ENCODE measurements at regions of chr2 and their contacts with region 1.

Region 1: DNA sequence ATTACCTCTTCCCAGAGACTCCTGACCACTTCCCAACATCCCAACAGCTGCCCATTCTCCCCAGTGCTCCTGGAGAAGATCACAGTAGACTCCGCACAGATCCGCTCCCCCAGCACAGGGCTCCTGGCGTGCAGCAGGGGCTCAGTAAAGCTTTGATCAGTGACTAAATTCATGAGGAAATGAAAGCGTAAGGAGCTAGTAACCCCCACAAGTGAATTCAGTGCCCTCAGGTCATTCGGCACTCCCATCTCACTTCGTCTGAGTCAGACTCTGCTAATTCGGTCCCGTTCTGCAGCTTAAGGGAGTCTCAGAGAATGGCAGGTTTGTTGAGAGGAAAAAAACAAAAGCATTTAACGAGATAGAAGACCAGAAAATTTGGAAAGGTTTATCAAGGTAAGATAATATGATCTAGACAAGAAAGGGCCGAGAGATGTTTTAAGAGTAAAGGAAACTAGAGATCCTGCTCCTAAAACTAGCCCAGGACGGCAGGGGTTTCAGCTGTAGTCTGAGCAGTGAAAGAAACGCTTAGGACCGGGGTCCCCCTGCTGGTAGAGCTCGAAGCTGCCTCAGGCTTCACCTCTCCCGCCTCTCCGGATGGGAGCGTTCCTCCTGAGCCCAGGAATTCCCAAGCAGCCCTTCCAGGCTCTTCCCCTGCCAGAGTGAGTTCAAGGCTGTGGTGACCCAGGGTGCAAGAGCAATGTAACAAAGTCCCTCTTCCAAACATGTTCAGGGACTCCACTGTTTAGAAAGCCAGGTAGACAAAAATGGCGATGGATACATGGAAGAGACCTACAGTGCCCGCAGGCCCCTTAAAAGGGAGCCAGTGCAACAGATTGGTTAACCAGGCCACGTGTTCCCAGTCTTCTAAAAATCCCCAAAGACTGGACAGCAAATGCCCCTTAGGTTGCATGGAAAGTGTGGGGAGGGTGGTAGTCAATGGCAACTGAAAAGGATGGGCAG is 127.3 kb downstream of the DNER start:
- DNase-seq: peak; percentile 92
- ATAC-seq: peak; percentile 97
- H3K4me3 Mint-ChIP-seq: peak overlapping the region; percentile 52
- H3K27ac Mint-ChIP-seq: 0 out of 2 replicates have a peak overlapping the region, but pooled peaks have one; percentile 4
- H3K4me1 Mint-ChIP-seq: peaks cover 23% of the 10 kb centered on the region
- H3K27me3 Mint-ChIP-seq: no peaks in the 10 kb centered on the region
- CTCF ChIP-seq: peak; percentile 81

Region 2: GRCh38 chr2:229342376-229342775 is 244.7 kb before region 1 on chr2:
- CTCF ChIA-PET with region 1: interaction called, 46 read pairs
- POLR2A ChIA-PET with region 1: no interaction called
- DNase-seq: peak; percentile 83
- ATAC-seq: peak; percentile 91
- H3K4me3 Mint-ChIP-seq: no peak overlapping the region
- H3K27ac Mint-ChIP-seq: no peak overlapping the region
- H3K4me1 Mint-ChIP-seq: no peaks in the 10 kb centered on the region
- H3K27me3 Mint-ChIP-seq: no peaks in the 10 kb centered on the region
- CTCF ChIP-seq: peak; percentile 42; the same call in 1 of the 2 replicates

Region 3: DNA sequence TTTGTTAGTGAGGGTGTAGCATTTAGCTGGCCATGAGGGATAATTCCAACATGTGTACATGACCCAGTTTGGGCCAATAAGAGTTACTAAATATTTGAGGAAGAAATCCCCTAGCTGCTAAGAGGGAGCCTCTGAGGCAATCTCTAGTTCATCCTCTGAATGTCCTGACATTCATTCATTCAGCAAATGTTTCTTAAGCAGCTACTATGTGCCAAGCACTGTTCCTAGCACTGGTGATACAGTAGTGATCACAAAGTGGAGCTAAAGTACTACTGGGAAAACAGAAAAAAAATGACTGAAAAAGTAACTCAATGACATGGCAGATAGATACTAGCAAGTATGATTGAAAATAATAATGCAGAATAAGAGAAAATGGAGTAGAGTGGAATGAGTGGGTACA is 236.1 kb before region 1 on chr2:
- CTCF ChIA-PET with region 1: interaction called, 11 read pairs
- POLR2A ChIA-PET with region 1: no interaction called
- DNase-seq: no peak
- ATAC-seq: no peak
- H3K4me3 Mint-ChIP-seq: no peak overlapping the region
- H3K27ac Mint-ChIP-seq: no peak overlapping the region
- H3K4me1 Mint-ChIP-seq: no peaks in the 10 kb centered on the region
- H3K27me3 Mint-ChIP-seq: no peaks in the 10 kb centered on the region
- CTCF ChIP-seq: no peak

Region 4: GRCh38 chr2:229431327-229431954 is 155.6 kb before region 1 on chr2:
- CTCF ChIA-PET with region 1: interaction called, 46 read pairs
- POLR2A ChIA-PET with region 1: no interaction called
- DNase-seq: no peak
- ATAC-seq: peak; percentile 28; the same call in 1 of the 2 replicates
- H3K4me3 Mint-ChIP-seq: no peak overlapping the region
- H3K27ac Mint-ChIP-seq: no peak overlapping the region
- H3K4me1 Mint-ChIP-seq: peaks cover 3% of the 10 kb centered on the region; the same call in 1 of the 2 replicates
- H3K27me3 Mint-ChIP-seq: no peaks in the 10 kb centered on the region
- CTCF ChIP-seq: peak; percentile 43; the same call in 1 of the 2 replicates

Region 5: DNA sequence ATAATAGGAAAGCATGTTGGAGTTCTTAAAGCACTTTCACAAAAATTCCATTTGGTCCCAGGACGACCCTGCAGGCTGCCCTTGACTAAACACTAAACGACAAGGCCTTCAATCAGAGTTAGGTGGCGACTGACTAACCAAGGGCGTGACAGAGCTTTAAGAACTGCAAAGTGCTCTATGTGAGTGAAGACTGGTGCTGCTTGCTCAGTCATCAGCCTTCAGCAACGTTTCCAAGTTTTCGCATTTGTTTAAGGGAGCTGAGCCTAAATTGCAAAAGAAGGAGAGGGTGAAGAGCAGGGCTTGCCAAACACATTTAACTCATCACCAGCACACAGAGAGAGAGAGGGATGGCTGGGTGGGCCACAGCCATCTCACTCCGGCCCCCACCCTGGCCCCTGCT is 111.2 kb before region 1 on chr2:
- CTCF ChIA-PET with region 1: interaction called, 10 read pairs
- POLR2A ChIA-PET with region 1: no interaction called
- DNase-seq: no peak
- ATAC-seq: peak; percentile 74
- H3K4me3 Mint-ChIP-seq: no peak overlapping the region
- H3K27ac Mint-ChIP-seq: no peak overlapping the region; the same call in 1 of the 2 replicates
- H3K4me1 Mint-ChIP-seq: peaks cover 35% of the 10 kb centered on the region
- H3K27me3 Mint-ChIP-seq: no peaks in the 10 kb centered on the region
- CTCF ChIP-seq: no peak

Region 6: DNA sequence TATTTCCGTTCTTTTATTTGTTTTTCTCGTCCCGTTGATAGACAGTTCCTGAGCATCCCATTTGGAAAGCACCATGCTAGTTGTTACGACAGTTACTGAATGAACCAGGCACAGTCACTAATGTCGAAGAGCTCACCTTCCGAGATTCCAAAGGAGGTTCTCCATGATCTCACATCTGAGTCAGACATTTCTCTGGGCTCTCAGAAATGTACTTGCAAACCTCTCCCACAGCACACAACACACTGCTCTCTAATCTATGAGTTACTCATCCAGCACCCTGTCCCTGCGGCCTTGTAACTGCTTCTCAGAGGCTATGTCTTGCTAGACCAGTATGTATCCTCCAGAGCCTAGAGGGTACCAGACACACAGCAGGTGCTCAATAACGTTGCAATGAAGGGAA is 47.4 kb before region 1 on chr2:
- CTCF ChIA-PET with region 1: no interaction called
- POLR2A ChIA-PET with region 1: no interaction called
- DNase-seq: no peak
- ATAC-seq: no peak
- H3K4me3 Mint-ChIP-seq: no peak overlapping the region
- H3K27ac Mint-ChIP-seq: no peak overlapping the region
- H3K4me1 Mint-ChIP-seq: peaks cover 8% of the 10 kb centered on the region
- H3K27me3 Mint-ChIP-seq: no peaks in the 10 kb centered on the region
- CTCF ChIP-seq: no peak

Region 7: GRCh38 chr2:229714736-229715541 is 127.9 kb after region 1 on chr2:
- CTCF ChIA-PET with region 1: interaction called, 10 read pairs
- POLR2A ChIA-PET with region 1: no interaction called
- DNase-seq: peak; percentile 87
- ATAC-seq: peak; percentile 74
- H3K4me3 Mint-ChIP-seq: peak overlapping the region; percentile 65
- H3K27ac Mint-ChIP-seq: no peak overlapping the region
- H3K4me1 Mint-ChIP-seq: peaks cover 20% of the 10 kb centered on the region
- H3K27me3 Mint-ChIP-seq: peaks cover 58% of the 10 kb centered on the region
- CTCF ChIP-seq: no peak

Measured in WTC11 (cell line).